ENCODE measurements at regions of chr3 and their contacts with region 1.

Region 1: DNA sequence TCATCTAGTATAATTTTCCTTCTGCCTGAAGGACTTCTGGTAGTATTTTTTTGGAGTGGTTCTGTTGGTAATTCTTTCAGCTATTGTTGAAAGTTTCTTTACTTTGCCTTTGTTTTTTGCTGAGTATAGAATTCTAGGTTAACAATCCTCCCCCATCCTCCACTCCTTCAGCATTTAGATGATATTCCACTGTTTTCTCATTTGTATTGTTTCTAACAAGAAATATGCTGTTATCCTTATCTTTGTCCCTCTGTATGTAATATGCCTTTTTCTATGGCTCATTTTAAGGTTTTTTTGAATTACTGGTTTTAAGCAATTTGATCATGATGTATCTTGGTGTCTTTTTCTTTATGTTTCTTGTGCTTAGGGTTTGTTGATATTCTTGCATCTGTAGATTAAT is 53.9 kb downstream of the KLF15 start:
- DNase-seq: no peak
- ATAC-seq: no peak
- H3K4me3 ChIP-seq: no peak overlapping the region
- H3K27ac ChIP-seq: no peak overlapping the region
- H3K4me1 ChIP-seq: peaks cover 16% of the 10 kb centered on the region
- H3K27me3 ChIP-seq: no peaks in the 10 kb centered on the region
- CTCF ChIP-seq: no peak

Region 2: GRCh38 chr3:126464494-126464893 is 161.2 kb after region 1 on chr3:
- CTCF ChIA-PET with region 1: no interaction called
- POLR2A ChIA-PET with region 1: interaction called, 10 read pairs
- intact Hi-C with region 1: no loop called
- DNase-seq: no peak
- ATAC-seq: no peak
- H3K4me3 ChIP-seq: no peak overlapping the region
- H3K27ac ChIP-seq: no peak overlapping the region
- H3K4me1 ChIP-seq: no peaks in the 10 kb centered on the region
- H3K27me3 ChIP-seq: no peaks in the 10 kb centered on the region
- CTCF ChIP-seq: no peak

Measured in PC-3 (cell line).